B cell (primary cell): ENCODE measurements at regions of chr19 and their contacts with region 1.

Region 1: GRCh38 chr19:36528194-36528920 is at the start of gene ZNF260:
- DNase-seq: peak; percentile 95
- ATAC-seq: peak; percentile 90
- H3K4me3 ChIP-seq: peak within 1 kb of the TSS; percentile 67 to 96 (median 81)
- H3K4me3 Mint-ChIP-seq: peak within 1 kb of the TSS; percentile 100
- H3K27ac ChIP-seq: peak within 1 kb of the TSS; percentile 86 to 88
- H3K27ac Mint-ChIP-seq: peak within 1 kb of the TSS; percentile 96
- H3K4me1 ChIP-seq: peaks cover 16 to 19% of the 10 kb centered on the region in 2 donors
- H3K4me1 Mint-ChIP-seq: peaks cover 22% of the 10 kb centered on the region
- H3K27me3 ChIP-seq: no peaks in the 10 kb centered on the region
- H3K27me3 Mint-ChIP-seq: no peaks in the 10 kb centered on the region
- CTCF ChIP-seq: no peak
- total RNA-seq, gene ZNF260: 13.2 and 20.4 TPM in 2 replicates

Region 2: GRCh38 chr19:36114763-36115452 is 413.4 kb before region 1 on chr19 and contains the start of gene POLR2I:
- CTCF ChIA-PET with region 1: no interaction called
- POLR2A ChIA-PET with region 1: no interaction called
- intact Hi-C with region 1: loop called (anchors 1 kb)
- DNase-seq: peak; percentile 100
- ATAC-seq: peak; percentile 87
- H3K4me3 ChIP-seq: peak within 1 kb of the TSS; percentile 76 to 91 (median 79)
- H3K4me3 Mint-ChIP-seq: peak within 1 kb of the TSS; percentile 95
- H3K27ac ChIP-seq: peak within 1 kb of the TSS; percentile 84 to 90
- H3K27ac Mint-ChIP-seq: peak within 1 kb of the TSS; percentile 99
- H3K4me1 ChIP-seq: peaks cover 16 to 23% of the 10 kb centered on the region in 2 donors
- H3K4me1 Mint-ChIP-seq: peaks cover 40% of the 10 kb centered on the region
- H3K27me3 ChIP-seq: no peaks in the 10 kb centered on the region
- H3K27me3 Mint-ChIP-seq: no peaks in the 10 kb centered on the region
- CTCF ChIP-seq: no peak
- total RNA-seq, gene POLR2I: 28.2 and 33.4 TPM in 2 replicates

Region 3: DNA sequence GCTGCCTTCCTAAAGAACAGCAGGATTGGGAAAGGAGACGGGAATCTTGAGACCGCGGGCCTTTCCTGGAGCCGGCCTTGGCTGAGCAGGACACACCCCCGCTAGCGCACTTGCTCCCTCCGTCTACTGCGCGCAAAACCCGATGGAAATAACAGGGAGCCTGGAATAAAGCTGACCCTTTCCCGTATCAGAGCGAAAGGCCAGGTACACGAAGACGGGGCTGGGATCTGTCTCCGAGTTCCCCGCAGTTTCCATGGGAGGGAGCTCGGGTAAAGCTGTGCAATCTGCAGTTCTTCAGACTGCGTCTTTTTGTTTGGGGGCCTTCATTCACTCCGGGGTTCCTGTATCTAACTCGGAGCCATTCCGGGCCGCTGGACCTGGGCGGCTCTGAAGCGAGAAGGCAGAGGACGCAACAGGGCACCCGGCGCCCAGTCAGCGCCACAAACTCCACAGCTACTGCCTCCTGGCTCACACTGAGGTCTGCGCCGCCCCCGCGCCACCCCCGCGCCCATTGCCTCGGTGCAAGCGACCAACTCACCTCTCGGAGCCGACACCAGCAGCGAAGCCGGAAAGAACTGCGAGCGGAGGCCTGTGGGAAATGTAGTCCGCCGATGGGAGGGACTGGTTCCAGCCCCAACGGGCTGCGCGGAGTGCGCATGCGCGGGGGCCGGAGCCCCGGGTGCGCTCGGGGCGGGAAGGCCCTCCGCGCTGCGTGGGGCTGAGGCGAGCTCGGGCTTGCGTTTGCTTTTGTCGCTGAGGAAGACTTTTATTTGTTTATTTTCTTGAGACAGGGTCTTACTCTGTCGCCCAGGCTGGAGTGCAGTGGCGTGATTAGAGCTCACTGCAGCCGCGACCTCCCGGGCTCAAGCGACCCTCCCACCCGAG is 149.5 kb before region 1 on chr19 and contains the start of gene ZFP14:
- CTCF ChIA-PET with region 1: no interaction called
- POLR2A ChIA-PET with region 1: interaction called, 8 read pairs
- intact Hi-C with region 1: loop called (anchors 1 kb)
- DNase-seq: peak; percentile 97
- ATAC-seq: peak; percentile 98
- H3K4me3 ChIP-seq: peak within 1 kb of the TSS; percentile 79 to 95 (median 85)
- H3K4me3 Mint-ChIP-seq: peak within 1 kb of the TSS; percentile 82
- H3K27ac ChIP-seq: peak within 1 kb of the TSS; percentile 83 to 94
- H3K27ac Mint-ChIP-seq: peak within 1 kb of the TSS; percentile 97
- H3K4me1 ChIP-seq: peaks cover 13 to 19% of the 10 kb centered on the region in 2 donors
- H3K4me1 Mint-ChIP-seq: peaks cover 19% of the 10 kb centered on the region
- H3K27me3 ChIP-seq: no peaks in the 10 kb centered on the region
- H3K27me3 Mint-ChIP-seq: no peaks in the 10 kb centered on the region
- CTCF ChIP-seq: peak; percentile 66
- total RNA-seq, gene ZFP14: 22.4 and 22.7 TPM in 2 replicates

Region 4: GRCh38 chr19:36514012-36514612 is 14.2 kb before region 1 on chr19:
- CTCF ChIA-PET with region 1: no interaction called
- POLR2A ChIA-PET with region 1: no interaction called
- intact Hi-C with region 1: no loop called
- DNase-seq: no peak
- ATAC-seq: no peak
- H3K4me3 ChIP-seq: no peak overlapping the region
- H3K4me3 Mint-ChIP-seq: no peak overlapping the region
- H3K27ac ChIP-seq: no peak overlapping the region
- H3K27ac Mint-ChIP-seq: no peak overlapping the region
- H3K4me1 ChIP-seq: no peaks in the 10 kb centered on the region
- H3K4me1 Mint-ChIP-seq: no peaks in the 10 kb centered on the region
- H3K27me3 ChIP-seq: no peaks in the 10 kb centered on the region
- H3K27me3 Mint-ChIP-seq: no peaks in the 10 kb centered on the region
- CTCF ChIP-seq: no peak

Region 5: GRCh38 chr19:36605101-36605876 is 76.9 kb after region 1 on chr19 and contains the start of gene ZNF382:
- CTCF ChIA-PET with region 1: interaction called, 4 read pairs
- POLR2A ChIA-PET with region 1: interaction called, 9 read pairs
- intact Hi-C with region 1: loop called (anchors 1 kb)
- DNase-seq: peak; percentile 91
- ATAC-seq: peak; percentile 77
- H3K4me3 ChIP-seq: peak within 1 kb of the TSS; percentile 24 to 96 (median 91)
- H3K4me3 Mint-ChIP-seq: peak within 1 kb of the TSS; percentile 97
- H3K27ac ChIP-seq: peak within 1 kb of the TSS; percentile 94 to 98
- H3K27ac Mint-ChIP-seq: peak within 1 kb of the TSS; percentile 96
- H3K4me1 ChIP-seq: peaks cover 12 to 16% of the 10 kb centered on the region in 2 donors
- H3K4me1 Mint-ChIP-seq: peaks cover 24% of the 10 kb centered on the region
- H3K27me3 ChIP-seq: no peaks in the 10 kb centered on the region
- H3K27me3 Mint-ChIP-seq: no peaks in the 10 kb centered on the region
- CTCF ChIP-seq: no peak
- total RNA-seq, gene ZNF382: 24.7 and 24.8 TPM in 2 replicates

Region 6: DNA sequence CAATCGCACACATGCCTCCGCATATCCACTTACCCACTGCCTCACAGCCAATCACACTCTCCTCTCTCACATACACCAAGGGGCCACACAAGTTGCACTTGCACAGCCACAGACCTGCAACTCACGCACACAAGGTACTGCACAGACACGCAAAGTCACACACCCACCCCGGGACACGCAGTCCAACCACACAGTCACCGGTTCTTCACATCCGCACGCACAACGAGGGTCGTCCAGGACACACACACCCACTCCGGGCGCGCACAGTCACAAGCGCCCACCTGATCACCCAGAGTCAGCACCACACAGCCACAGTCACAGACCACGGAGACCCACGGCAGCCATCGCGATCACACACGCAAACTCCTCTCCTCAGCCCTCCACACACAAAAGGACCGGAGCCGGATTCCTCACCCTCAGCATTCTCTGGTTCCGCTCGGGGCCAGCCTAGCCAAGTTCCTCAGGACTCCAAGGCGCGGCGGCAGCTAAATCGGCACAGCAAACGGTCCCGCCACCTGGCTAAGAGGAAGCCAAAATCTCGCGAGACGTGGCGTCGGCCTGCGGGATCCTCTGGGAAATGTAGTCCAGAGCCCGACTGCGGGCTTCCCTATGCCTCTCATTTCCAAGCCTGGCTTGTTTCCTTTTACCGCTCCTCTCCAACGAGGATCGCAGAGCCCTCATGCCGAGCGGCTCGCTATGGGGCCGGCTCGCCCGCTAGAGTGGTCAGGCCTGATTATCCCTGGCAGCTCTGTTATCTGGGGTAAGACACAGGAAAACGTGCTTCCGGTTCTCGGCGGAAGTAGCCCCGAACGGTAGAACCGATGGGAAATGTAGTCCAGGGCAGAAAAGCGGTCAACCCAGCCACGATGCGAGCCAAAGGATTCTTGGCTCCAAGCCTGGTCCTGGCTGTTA is 244.2 kb after region 1 on chr19 and contains the start of gene ZNF850:
- CTCF ChIA-PET with region 1: no interaction called
- POLR2A ChIA-PET with region 1: no interaction called
- intact Hi-C with region 1: loop called (anchors 2 kb)
- DNase-seq: peak; percentile 98
- ATAC-seq: peak; percentile 92
- H3K4me3 ChIP-seq: peak within 1 kb of the TSS; percentile 66 to 99 (median 96)
- H3K4me3 Mint-ChIP-seq: peak within 1 kb of the TSS; percentile 98
- H3K27ac ChIP-seq: peak within 1 kb of the TSS; percentile 69 to 81
- H3K27ac Mint-ChIP-seq: peak within 1 kb of the TSS; percentile 94
- H3K4me1 ChIP-seq: peaks cover 15 to 21% of the 10 kb centered on the region in 2 donors
- H3K4me1 Mint-ChIP-seq: peaks cover 25% of the 10 kb centered on the region
- H3K27me3 ChIP-seq: no peaks in the 10 kb centered on the region
- H3K27me3 Mint-ChIP-seq: no peaks in the 10 kb centered on the region
- CTCF ChIP-seq: no peak
- total RNA-seq, gene ZNF850: 6.0 and 6.7 TPM in 2 replicates

Region 7: GRCh38 chr19:36973021-36973843 is 444.9 kb after region 1 on chr19:
- CTCF ChIA-PET with region 1: no interaction called
- POLR2A ChIA-PET with region 1: no interaction called
- intact Hi-C with region 1: loop called (anchors 1 kb)
- DNase-seq: peak; percentile 92
- ATAC-seq: peak; percentile 97
- H3K4me3 ChIP-seq: peak overlapping the region; percentile 52 to 92 (median 79)
- H3K4me3 Mint-ChIP-seq: peak overlapping the region; percentile 97
- H3K27ac ChIP-seq: peak overlapping the region; percentile 49 to 71
- H3K27ac Mint-ChIP-seq: peak overlapping the region; percentile 91
- H3K4me1 ChIP-seq: peaks cover 11 to 16% of the 10 kb centered on the region in 2 donors
- H3K4me1 Mint-ChIP-seq: peaks cover 13% of the 10 kb centered on the region
- H3K27me3 ChIP-seq: no peaks in the 10 kb centered on the region
- H3K27me3 Mint-ChIP-seq: no peaks in the 10 kb centered on the region
- CTCF ChIP-seq: peak; percentile 78

Region 8: DNA sequence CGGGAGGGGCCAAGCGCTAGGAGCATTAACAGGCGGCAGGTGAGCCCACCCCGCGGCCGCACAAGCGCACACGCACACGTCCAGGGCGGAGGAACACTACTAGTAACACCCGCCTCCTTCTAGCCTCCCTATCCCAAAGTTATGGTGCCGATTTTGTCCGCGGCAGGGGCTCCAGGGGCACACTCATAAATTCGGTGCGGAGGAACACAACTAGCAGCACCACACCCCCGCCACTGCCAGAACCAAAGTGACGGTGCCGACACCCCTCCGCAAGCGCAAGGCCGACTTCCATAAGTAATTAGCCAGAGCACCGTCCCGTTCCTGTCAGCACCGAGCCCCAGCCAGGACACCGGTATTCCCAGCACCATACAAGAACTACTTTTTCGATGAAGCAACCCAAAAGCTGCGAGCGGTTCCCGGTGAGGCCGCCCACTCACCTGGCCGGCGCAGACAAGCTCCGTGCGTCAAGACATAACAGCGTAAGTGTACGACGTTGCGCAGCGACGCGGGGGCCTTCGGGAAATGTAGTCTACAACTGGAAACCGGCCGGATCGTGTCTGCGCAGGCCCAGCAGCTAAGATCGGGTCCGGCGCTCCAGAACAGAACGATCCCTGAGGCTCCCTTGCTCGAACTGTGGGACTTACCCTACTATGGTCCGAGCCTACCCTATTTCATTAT is 1066.1 kb after region 1 on chr19 and contains the starts of genes ZNF540 and ZNF571:
- CTCF ChIA-PET with region 1: no interaction called
- POLR2A ChIA-PET with region 1: no interaction called
- intact Hi-C with region 1: loop called (anchors 1 kb)
- DNase-seq: peak; percentile 95
- ATAC-seq: peak; percentile 96
- H3K4me3 ChIP-seq: peak within 1 kb of the TSS; percentile 67 to 88 (median 87)
- H3K4me3 Mint-ChIP-seq: peak within 1 kb of the TSS; percentile 99
- H3K27ac ChIP-seq: peak within 1 kb of the TSS; percentile 93 to 96
- H3K27ac Mint-ChIP-seq: peak within 1 kb of the TSS; percentile 99
- H3K4me1 ChIP-seq: peaks cover 11 to 14% of the 10 kb centered on the region in 2 donors
- H3K4me1 Mint-ChIP-seq: peaks cover 25% of the 10 kb centered on the region
- H3K27me3 ChIP-seq: no peaks in the 10 kb centered on the region
- H3K27me3 Mint-ChIP-seq: no peaks in the 10 kb centered on the region
- CTCF ChIP-seq: no peak
- total RNA-seq, gene ZNF540: 10.7 and 10.8 TPM in 2 replicates
- total RNA-seq, gene ZNF571: 10.0 and 13.1 TPM in 2 replicates